Head of caudate nucleus (tissue), 42 donors: ENCODE measurements at regions of chr2 and their contacts with region 1.

Region 1: DNA sequence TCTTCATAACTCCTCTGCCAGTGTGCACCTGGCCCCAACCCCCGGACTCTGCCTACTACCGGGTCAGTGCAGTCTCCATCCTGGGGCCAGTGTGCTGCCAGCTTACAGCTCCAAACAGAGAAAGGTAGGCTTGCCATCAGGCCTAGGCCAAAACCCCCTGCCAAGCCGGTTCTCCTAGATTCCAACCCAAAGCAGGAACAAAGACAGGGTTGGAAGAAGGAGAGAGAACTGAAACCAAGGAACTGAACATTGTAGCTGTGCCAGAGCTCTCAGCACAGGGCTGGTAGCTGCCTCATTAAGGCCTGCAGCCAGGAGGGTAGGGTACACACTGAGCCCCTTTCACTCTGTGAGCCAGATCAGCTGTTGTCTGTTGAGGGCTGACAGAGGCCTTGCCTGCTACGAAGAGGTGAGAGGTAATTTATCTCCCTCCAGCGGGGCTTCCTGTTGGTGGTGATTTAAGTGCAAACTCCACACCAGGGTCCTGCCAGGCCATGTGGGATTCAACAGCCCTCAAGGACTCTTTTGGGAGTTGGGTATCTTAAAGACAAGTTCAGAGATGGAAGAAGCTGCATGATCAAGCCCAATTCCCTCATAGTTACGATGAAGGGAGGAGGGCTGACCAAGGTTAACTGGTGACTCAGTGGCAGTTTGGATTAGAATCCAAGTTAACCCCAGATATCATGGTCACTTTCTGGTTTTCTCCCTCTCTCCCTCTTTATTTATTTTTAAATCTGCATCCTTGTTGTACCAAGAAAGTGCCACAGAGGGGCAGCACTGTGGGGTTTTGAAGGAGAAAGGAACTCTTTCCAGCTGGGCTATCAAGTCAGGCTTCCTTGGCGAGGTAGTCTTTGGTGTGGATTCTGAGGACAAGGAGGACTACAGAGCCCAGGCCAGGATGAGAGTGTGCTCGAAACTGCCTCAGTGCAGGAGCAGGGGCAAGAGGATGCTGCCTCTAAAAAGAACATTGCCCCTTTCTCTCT is 48.1 kb downstream of the CYRIA start:
- DNase-seq: peak in 26 of 42 donors; percentile 33 to 82 (median 60)

Region 2: DNA sequence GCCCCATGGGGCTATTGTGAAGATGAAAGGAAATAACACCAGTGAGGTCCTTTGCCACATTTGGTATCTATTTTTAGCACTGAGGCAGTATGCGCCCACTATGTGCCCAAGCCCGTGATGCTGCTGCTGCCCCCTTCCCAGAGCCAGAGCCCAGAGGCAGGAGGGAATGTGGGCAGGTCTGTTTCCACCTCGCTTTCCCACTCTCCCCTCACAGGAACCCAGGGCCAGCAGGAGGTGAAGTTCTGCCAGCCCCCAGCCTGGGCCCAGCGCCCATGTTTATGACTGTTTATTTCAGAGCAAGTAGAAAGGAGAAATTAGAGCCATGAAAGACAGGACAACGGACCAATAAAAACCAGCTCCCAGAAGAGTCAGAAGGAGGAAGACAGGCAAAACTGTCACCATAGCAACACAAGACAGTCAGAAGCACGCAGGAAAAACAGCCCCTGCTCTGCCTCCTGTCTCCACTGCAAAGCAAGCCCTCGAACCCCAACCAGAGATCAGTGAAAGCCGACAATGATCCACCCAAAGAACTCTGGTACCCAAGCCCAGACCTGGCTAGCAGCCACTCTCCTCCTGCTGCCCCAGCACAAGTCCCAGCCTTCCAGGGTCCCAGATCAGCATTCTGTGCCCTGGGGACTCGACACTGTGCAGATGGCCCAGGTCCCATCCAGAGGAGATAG is 46.6 kb after region 1 on chr2:
- intact Hi-C with region 1: loop called (anchors 5 kb)
- DNase-seq: peak in 41 of 42 donors; percentile 42 to 92 (median 72)